ENCODE measurements at regions of chr17 and their contacts with region 1.

Region 1: GRCh38 chr17:9475101-9475658 is 100.4 kb downstream of the STX8 start:
- DNase-seq: no peak
- ATAC-seq: no peak
- H3K4me3 ChIP-seq: no peak overlapping the region
- H3K27ac ChIP-seq: no peak overlapping the region
- H3K4me1 ChIP-seq: no peaks in the 10 kb centered on the region
- H3K27me3 ChIP-seq: no peaks in the 10 kb centered on the region
- CTCF ChIP-seq: no peak

Region 2: GRCh38 chr17:9389110-9389509 is 86.1 kb before region 1 on chr17:
- CTCF ChIA-PET with region 1: no interaction called
- POLR2A ChIA-PET with region 1: no interaction called
- in situ Hi-C with region 1: no loop called
- intact Hi-C with region 1: loop called (anchors 5 kb)
- DNase-seq: no peak
- ATAC-seq: peak; percentile 90
- H3K4me3 ChIP-seq: no peak overlapping the region
- H3K27ac ChIP-seq: no peak overlapping the region
- H3K4me1 ChIP-seq: no peaks in the 10 kb centered on the region
- H3K27me3 ChIP-seq: no peaks in the 10 kb centered on the region
- CTCF ChIP-seq: no peak